PC-9 (cell line): ENCODE measurements at regions of chr20 and their contacts with region 1.

Region 1: DNA sequence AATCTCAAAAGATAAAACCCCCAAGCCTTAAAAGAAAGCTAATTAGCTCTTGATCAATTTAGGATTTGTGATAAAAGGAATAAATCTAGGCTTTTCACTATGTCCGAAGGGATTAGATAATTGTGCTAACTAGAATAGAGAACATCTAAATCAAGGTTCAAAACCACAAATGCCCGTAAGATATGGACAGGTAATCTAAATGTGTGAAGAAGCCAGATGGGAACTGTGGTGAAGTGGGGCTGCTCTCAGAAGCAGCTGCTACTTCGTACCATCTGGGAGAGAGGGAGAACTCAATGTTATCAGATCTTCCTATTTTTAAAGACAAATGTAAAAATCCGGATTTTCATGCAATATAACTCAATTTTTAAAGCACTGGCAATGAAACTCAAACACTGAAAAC is 44.2 kb downstream of the NCOA6 start:
- DNase-seq: no peak
- H3K4me3 ChIP-seq: no peak overlapping the region
- H3K27ac ChIP-seq: no peak overlapping the region
- H3K4me1 ChIP-seq: no peaks in the 10 kb centered on the region
- H3K27me3 ChIP-seq: no peaks in the 10 kb centered on the region
- CTCF ChIP-seq: no peak

Region 2: DNA sequence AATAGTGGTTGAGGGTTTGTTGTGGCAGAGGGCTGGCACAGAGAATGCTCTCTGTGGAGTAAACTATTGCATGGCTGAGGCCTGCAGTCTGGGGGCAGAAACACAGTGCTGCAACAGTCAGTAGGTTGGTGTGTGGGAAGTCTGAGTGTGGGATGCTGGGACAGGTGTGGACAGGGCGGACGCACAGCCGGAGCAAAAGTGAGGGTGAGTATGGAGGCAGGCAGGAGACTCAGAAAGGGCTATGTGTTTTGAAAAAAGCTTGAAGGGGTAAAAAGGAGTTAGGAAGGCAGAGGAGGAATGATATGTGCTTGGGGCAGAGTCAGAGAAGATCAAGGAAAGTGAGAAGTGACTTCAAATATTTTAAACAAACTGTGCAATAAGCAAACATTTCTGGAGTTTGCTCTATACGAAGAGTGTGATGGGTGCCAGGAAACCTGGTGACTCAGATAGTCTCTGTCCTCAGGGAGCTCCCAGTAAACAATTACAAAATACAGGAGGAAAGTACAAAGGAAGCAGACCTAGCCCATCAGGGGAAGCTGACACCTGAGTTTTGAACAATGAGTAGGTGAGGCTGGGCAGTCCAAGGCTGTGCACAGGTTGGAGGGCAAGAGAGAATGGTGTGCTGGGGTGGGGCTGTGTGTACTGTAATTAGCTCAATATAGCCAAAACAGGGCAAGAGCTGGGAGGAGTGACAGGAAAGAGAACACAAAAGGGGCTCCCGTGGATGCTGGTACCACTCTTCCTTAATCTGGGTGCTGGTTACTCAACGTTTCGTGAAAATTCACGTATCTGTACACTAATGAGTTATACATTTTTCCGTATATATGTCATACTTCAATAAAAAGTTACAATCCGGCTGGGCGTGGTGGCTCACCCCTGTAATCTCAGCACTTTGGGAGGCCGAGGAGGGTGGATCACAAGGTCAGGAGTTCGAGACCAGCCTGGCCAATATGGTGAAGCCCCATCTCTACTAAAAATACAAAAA is 159.5 kb before region 1 on chr20:
- CTCF ChIA-PET with region 1: no interaction called
- POLR2A ChIA-PET with region 1: no interaction called
- intact Hi-C with region 1: no loop called
- DNase-seq: peak; percentile 25 to 68
- H3K4me3 ChIP-seq: no peak overlapping the region
- H3K27ac ChIP-seq: peak overlapping the region; percentile 40; the same call in 1 of the 2 replicates
- H3K4me1 ChIP-seq: peaks cover 25% of the 10 kb centered on the region
- H3K27me3 ChIP-seq: no peaks in the 10 kb centered on the region
- CTCF ChIP-seq: no peak

Region 3: GRCh38 chr20:34798328-34798727 is 17.1 kb after region 1 on chr20:
- CTCF ChIA-PET with region 1: no interaction called
- POLR2A ChIA-PET with region 1: interaction called, 11 read pairs
- intact Hi-C with region 1: no loop called
- DNase-seq: no peak
- H3K4me3 ChIP-seq: no peak overlapping the region
- H3K27ac ChIP-seq: no peak overlapping the region
- H3K4me1 ChIP-seq: no peaks in the 10 kb centered on the region
- H3K27me3 ChIP-seq: no peaks in the 10 kb centered on the region
- CTCF ChIP-seq: no peak

Region 4: GRCh38 chr20:35146920-35147574 is 365.8 kb after region 1 on chr20 and contains the start of gene EDEM2:
- CTCF ChIA-PET with region 1: no interaction called
- POLR2A ChIA-PET with region 1: no interaction called
- intact Hi-C with region 1: no loop called
- DNase-seq: peak; percentile 89 to 96
- H3K4me3 ChIP-seq: peak within 1 kb of the TSS; percentile 93
- H3K27ac ChIP-seq: peak within 1 kb of the TSS; percentile 94
- H3K4me1 ChIP-seq: peaks cover 14% of the 10 kb centered on the region
- H3K27me3 ChIP-seq: no peaks in the 10 kb centered on the region
- CTCF ChIP-seq: no peak
- total RNA-seq, gene EDEM2: 28.6 and 34.9 TPM in 2 replicates